ENCODE measurements at regions of chr1 and their contacts with region 1.

Region 1: DNA sequence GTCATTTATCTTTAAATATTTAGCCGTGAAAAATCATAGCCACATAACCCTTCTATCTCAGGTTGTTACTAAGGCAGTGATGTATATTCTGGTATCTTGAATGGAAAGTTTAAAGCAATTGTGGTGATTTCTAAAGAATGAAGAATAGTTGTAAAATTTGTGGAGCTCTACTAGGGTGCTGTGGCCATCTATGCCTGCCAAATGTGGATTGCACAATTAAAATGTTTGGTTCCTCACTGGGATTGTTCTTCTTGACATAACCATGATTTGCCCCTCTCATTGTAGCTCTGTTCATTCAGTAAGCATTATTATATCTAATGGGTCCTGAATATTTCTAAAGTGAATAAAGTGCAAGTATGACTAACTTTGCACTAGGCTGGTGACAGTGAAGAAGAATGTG is 50.1 kb downstream of the AK4 start:
- DNase-seq: no peak

Region 2: DNA sequence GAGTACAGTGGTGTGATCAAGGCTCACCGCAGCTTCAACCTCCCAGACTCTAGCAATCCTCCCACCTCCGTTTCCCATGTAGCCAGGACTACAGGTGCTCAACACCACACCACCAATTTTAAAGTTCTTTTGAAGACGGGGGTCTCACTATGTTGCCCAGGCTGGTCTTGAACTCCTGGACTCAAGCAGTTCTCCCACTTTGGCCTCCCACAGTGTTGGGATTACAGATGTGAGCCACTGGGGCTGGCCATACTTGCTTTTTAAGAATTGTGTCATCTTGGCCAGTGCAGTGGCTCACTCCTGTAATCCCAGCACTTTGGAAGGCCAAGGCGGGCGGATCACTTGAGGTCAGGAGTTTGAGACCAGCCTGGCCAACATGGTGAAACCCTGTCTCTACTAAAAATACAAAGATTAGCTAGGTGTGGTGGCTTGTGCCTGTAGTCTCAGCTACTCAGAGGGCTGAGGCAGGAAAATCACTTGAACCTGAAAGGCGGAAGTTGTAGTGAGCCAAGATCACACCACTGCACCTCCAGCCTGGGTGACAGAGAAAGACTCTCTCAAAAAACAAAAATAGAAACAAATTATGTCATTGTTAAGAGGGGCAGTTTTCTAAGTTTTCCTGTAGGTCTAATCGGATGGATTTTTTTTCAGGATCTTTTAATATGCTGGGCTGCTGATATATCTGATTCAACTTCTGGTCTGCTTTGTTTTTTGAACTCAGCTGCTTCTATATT is 31.4 kb before region 1 on chr1:
- intact Hi-C with region 1: loop called in 1 of 2 experiments (anchors 1 kb)
- DNase-seq: peak; percentile 46

Region 3: GRCh38 chr1:65359891-65360290 is 161.8 kb after region 1 on chr1:
- intact Hi-C with region 1: no loop called
- DNase-seq: no peak